T-cell (primary cell): ENCODE measurements at regions of chr6 and their contacts with region 1.

Region 1: GRCh38 chr6:166775180-166776081 is 148.4 kb upstream of the RPS6KA2 start:
- DNase-seq: peak in 34 of 35 experiments; percentile 25 to 90 (median 53)
- ATAC-seq: peak; percentile 67 to 78 (median 77)
- H3K4me3 ChIP-seq: no peak overlapping the region
- H3K4me3 Mint-ChIP-seq: no peak overlapping the region
- H3K27ac ChIP-seq: no peak overlapping the region
- H3K27ac Mint-ChIP-seq: no peak overlapping the region
- H3K4me1 ChIP-seq: peaks cover 2 to 6% of the 10 kb centered on the region in 2 experiments
- H3K4me1 Mint-ChIP-seq: peaks cover 4 to 7% (median 6%) of the 10 kb centered on the region in 3 donors
- H3K27me3 ChIP-seq: peaks cover 0 to 9% of the 10 kb centered on the region in 2 experiments
- H3K27me3 Mint-ChIP-seq: peaks cover 4 to 7% of the 10 kb centered on the region in 2 donors

Region 2: GRCh38 chr6:166764473-166765233 is 10.8 kb before region 1 on chr6:
- CTCF ChIA-PET with region 1: interaction called, 4 to 13 read pairs
- POLR2A ChIA-PET with region 1: no interaction called
- DNase-seq: no peak
- ATAC-seq: no peak
- H3K4me3 ChIP-seq: no peak overlapping the region
- H3K4me3 Mint-ChIP-seq: no peak overlapping the region
- H3K27ac ChIP-seq: no peak overlapping the region
- H3K27ac Mint-ChIP-seq: no peak overlapping the region
- H3K4me1 ChIP-seq: peaks cover 6 to 11% of the 10 kb centered on the region in 2 experiments
- H3K4me1 Mint-ChIP-seq: peaks cover 10 to 15% (median 12%) of the 10 kb centered on the region in 3 donors
- H3K27me3 ChIP-seq: peaks cover 0 to 1% of the 10 kb centered on the region in 2 experiments
- H3K27me3 Mint-ChIP-seq: no peaks in the 10 kb centered on the region

Region 3: GRCh38 chr6:167329014-167329413 is 553.6 kb after region 1 on chr6:
- CTCF ChIA-PET with region 1: no interaction called
- POLR2A ChIA-PET with region 1: no interaction called
- DNase-seq: no peak
- ATAC-seq: no peak
- H3K4me3 ChIP-seq: no peak overlapping the region
- H3K4me3 Mint-ChIP-seq: no peak overlapping the region
- H3K27ac ChIP-seq: no peak overlapping the region
- H3K27ac Mint-ChIP-seq: no peak overlapping the region
- H3K4me1 ChIP-seq: no peaks in the 10 kb centered on the region
- H3K4me1 Mint-ChIP-seq: no peaks in the 10 kb centered on the region
- H3K27me3 ChIP-seq: peaks cover 0 to 19% of the 10 kb centered on the region in 2 experiments
- H3K27me3 Mint-ChIP-seq: peaks cover 4 to 14% of the 10 kb centered on the region in 2 donors